GM10248 (cell line): ENCODE measurements at regions of chr11 and their contacts with region 1.

Region 1: DNA sequence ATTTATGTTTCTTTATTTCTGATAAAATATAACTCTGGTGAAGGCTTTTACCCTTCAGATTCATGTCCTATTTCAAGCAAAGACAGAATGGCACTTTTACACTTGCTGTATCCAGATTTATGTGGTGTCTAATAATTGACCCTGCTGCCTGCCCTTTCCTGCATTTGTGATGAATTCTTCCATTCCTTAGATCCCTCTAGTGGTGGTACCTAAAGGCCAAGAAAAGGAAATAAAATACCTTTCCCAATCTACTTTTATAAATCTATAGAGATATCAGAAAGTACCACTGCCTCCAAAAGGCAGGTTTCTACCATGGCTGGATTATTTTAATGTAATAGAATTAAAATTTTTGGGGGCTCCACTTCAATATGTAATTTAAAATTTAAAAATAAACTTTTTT is 34.2 kb downstream of the CCDC81 start:
- DNase-seq: no peak
- CTCF ChIP-seq: no peak

Region 2: GRCh38 chr11:86784241-86784681 is 375.4 kb after region 1 on chr11:
- CTCF ChIA-PET with region 1: no interaction called
- POLR2A ChIA-PET with region 1: interaction called, 10 read pairs
- DNase-seq: no peak
- CTCF ChIP-seq: no peak